Endothelial cell of umbilical vein (primary cell): ENCODE measurements at regions of chr5 and their contacts with region 1.

Region 1: DNA sequence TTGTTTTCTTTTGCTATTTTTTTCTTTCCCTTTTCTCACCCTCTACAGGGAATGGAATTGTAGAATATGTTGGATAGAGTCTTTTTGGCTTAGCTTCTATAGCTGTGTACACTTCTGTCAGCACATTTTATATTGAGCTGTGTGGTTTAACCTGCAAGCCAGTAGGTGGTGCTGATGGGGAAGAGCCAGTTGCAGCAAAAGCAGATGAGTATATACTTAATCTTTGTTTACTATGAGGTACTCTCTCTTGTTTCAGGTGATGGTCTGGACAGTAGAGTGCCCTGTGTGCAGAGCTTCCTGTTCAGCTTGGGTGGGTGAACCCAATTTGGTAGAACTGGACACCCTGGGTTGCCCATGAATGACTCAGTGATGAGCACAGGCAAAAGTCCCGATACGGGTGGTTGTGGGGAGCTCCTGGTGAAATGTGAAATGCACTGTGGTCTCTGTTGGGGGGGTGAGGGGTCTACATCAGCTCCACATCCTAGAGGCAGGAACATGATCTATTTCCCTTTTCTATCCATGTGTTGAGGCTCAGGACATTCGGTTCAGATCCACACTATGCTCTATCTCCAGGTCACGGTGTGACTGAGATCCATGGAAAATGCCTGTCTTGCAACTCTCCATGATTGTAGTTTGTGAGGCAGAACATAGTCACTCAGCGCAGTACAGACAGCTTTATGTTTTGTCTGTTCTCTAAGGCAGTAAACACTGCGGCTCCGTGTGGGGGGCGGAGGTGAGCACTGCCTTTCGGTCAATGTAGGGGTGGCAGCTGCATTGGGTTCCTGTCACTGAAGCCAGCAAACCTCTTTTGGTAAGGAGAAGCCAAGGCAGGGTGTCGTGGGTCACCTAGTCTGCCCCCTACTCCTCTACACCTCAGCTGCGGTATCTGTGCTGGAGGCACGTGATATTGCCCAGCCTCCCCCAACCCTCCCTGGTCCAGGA is 353.2 kb downstream of the PRR16 start:
- DNase-seq: peak; percentile 17
- H3K4me3 ChIP-seq: no peak overlapping the region
- H3K27ac ChIP-seq: no peak overlapping the region
- H3K4me1 ChIP-seq: no peaks in the 10 kb centered on the region
- H3K27me3 ChIP-seq: no peaks in the 10 kb centered on the region
- CTCF ChIP-seq: peak; percentile 31 to 46
- POLR2A ChIP-seq: no peak

Region 2: DNA sequence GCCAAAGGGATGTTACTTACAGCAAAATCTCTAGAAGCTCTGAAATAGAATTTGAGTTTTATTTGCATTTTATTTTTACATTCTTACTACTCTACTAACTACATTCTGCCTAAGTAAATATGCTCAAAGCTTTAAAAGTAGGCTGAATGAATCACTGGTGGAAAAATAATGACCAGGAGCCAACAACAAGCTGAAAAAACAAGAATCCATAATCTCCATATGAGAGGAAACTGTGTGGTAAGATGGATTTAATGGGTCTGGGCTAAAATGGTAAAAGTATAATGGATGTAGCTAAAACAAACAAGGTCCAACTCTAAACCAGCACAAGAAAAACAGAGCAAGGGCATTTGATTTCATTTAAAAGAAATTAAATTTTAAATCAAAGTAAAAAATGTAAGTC is 508.6 kb after region 1 on chr5:
- CTCF ChIA-PET with region 1: no interaction called
- POLR2A ChIA-PET with region 1: no interaction called
- dilution Hi-C with region 1: no loop called
- intact Hi-C with region 1: loop called (anchors 10 kb)
- DNase-seq: peak; percentile 90
- H3K4me3 ChIP-seq: no peak overlapping the region
- H3K27ac ChIP-seq: no peak overlapping the region
- H3K4me1 ChIP-seq: no peaks in the 10 kb centered on the region
- H3K27me3 ChIP-seq: no peaks in the 10 kb centered on the region
- CTCF ChIP-seq: no peak
- POLR2A ChIP-seq: peak; percentile 34

Region 3: DNA sequence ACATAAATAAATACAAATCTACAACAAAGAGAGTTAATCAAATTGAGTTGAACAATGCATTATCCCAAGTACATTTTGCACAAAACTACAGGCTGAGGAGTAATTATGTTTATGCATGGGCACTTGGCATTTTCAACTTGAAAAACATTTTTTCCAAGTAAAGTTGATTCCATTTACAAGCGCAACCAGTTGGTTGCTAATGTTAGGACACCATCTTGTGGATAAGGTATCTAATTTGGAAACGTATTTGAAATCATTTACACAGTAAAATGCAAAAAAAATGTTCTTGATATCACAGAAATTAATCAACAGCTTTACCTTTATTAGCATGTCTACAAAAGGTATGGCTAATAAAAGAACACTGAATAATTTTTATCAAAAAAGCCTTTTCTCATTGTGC is 1053.2 kb after region 1 on chr5:
- CTCF ChIA-PET with region 1: interaction called, 6 read pairs
- POLR2A ChIA-PET with region 1: no interaction called
- dilution Hi-C with region 1: no loop called
- intact Hi-C with region 1: loop called (anchors 1 kb)
- DNase-seq: peak; percentile 7
- H3K4me3 ChIP-seq: no peak overlapping the region
- H3K27ac ChIP-seq: no peak overlapping the region
- H3K4me1 ChIP-seq: no peaks in the 10 kb centered on the region
- H3K27me3 ChIP-seq: no peaks in the 10 kb centered on the region
- CTCF ChIP-seq: no peak
- POLR2A ChIP-seq: no peak